Activated CD4-positive, alpha-beta memory T cell treated with anti-CD3 and anti-CD28 coated beads, Interleukin-2, amount 10 ng/mL, durations not matched to agents 7 days and 5 days (primary cell): ENCODE measurements at regions of chr20 and their contacts with region 1.

Region 1: GRCh38 chr20:59032023-59032712 is at the start of gene ATP5F1E:
- DNase-seq: peak; percentile 97
- H3K4me3 Mint-ChIP-seq: peak within 1 kb of the TSS; percentile 88
- H3K27ac Mint-ChIP-seq: peak within 1 kb of the TSS; percentile 84
- H3K4me1 Mint-ChIP-seq: peaks cover 74% of the 10 kb centered on the region
- H3K27me3 Mint-ChIP-seq: no peaks in the 10 kb centered on the region
- total RNA-seq, gene ATP5F1E: 80.4 to 82.1 TPM

Region 2: GRCh38 chr20:58888521-58889333 is 143.4 kb before region 1 on chr20:
- CTCF ChIA-PET with region 1: no interaction called
- POLR2A ChIA-PET with region 1: interaction called, 21 read pairs
- DNase-seq: peak; percentile 86
- H3K4me3 Mint-ChIP-seq: peak overlapping the region; percentile 77
- H3K27ac Mint-ChIP-seq: peak overlapping the region; percentile 72
- H3K4me1 Mint-ChIP-seq: peaks cover 23% of the 10 kb centered on the region
- H3K27me3 Mint-ChIP-seq: peaks cover 2% of the 10 kb centered on the region

Region 3: DNA sequence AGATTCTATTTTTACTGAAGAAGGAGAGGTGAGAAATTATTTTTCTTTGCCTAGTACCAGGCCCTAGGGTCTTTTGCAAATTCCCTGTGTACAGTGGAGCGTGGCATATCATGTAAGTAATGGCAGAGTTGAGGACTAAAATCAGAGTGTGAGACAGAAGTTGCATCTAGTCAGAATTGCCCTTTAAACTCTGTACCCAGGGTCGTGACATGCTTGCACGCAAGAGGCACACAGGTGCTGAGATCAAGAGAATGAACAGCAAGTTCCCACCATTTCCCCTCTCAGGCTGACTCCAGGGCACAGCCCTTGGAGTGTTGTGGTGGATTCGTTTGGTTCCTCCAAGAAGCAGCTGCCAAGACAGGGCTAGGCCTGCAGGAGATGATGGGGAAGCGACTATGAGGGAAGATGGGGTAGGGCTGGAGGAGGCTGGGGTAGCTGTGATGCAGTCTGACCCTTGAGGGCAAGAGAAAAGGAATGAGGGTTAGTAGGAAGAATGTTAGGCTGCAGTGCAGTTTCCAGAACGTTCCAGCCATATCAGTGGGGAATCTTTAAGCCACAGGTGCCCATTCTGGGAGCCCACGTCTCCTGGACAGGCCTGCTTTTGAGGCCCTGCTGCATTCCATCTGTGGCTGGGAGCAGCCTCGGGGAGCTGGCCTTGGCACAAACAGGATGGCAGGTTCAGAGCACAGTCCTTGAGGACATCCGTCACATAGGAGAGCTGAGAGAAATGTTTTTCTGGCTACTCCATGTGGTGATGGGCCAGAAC is 44.2 kb before region 1 on chr20:
- CTCF ChIA-PET with region 1: no interaction called
- POLR2A ChIA-PET with region 1: interaction called, 50 read pairs
- DNase-seq: no peak
- H3K4me3 Mint-ChIP-seq: no peak overlapping the region
- H3K27ac Mint-ChIP-seq: no peak overlapping the region
- H3K4me1 Mint-ChIP-seq: peaks cover 39% of the 10 kb centered on the region
- H3K27me3 Mint-ChIP-seq: no peaks in the 10 kb centered on the region

Region 4: GRCh38 chr20:59013959-59014608 is 18.1 kb before region 1 on chr20:
- CTCF ChIA-PET with region 1: interaction called, 3 read pairs
- POLR2A ChIA-PET with region 1: interaction called, 18 read pairs
- DNase-seq: peak; percentile 53
- H3K4me3 Mint-ChIP-seq: no peak overlapping the region
- H3K27ac Mint-ChIP-seq: peak overlapping the region; percentile 31
- H3K4me1 Mint-ChIP-seq: peaks cover 61% of the 10 kb centered on the region
- H3K27me3 Mint-ChIP-seq: no peaks in the 10 kb centered on the region

Region 5: GRCh38 chr20:59159493-59160376 is 127.6 kb after region 1 on chr20:
- CTCF ChIA-PET with region 1: no interaction called
- POLR2A ChIA-PET with region 1: interaction called, 13 read pairs
- DNase-seq: peak; percentile 70
- H3K4me3 Mint-ChIP-seq: peak overlapping the region; percentile 76
- H3K27ac Mint-ChIP-seq: peak overlapping the region; percentile 99
- H3K4me1 Mint-ChIP-seq: peaks cover 68% of the 10 kb centered on the region
- H3K27me3 Mint-ChIP-seq: peaks cover 1% of the 10 kb centered on the region